ENCODE measurements at regions of chr15 and their contacts with region 1.

Region 1: GRCh38 chr15:100905850-100906249 is 13.3 kb upstream of the LRRK1 start:
- DNase-seq: no peak
- H3K4me3 Mint-ChIP-seq: no peak overlapping the region
- H3K27ac Mint-ChIP-seq: no peak overlapping the region
- H3K4me1 Mint-ChIP-seq: no peaks in the 10 kb centered on the region
- H3K27me3 Mint-ChIP-seq: peaks cover 11% of the 10 kb centered on the region

Region 2: GRCh38 chr15:100918034-100918689 is 12.3 kb after region 1 on chr15:
- CTCF ChIA-PET with region 1: interaction called, 14 read pairs
- POLR2A ChIA-PET with region 1: no interaction called
- DNase-seq: peak; percentile 75
- H3K4me3 Mint-ChIP-seq: peak overlapping the region; percentile 56
- H3K27ac Mint-ChIP-seq: no peak overlapping the region
- H3K4me1 Mint-ChIP-seq: peaks cover 27% of the 10 kb centered on the region
- H3K27me3 Mint-ChIP-seq: peaks cover 70% of the 10 kb centered on the region

Region 3: GRCh38 chr15:101024073-101024695 is 118.3 kb after region 1 on chr15:
- CTCF ChIA-PET with region 1: no interaction called
- POLR2A ChIA-PET with region 1: no interaction called
- DNase-seq: peak; percentile 1
- H3K4me3 Mint-ChIP-seq: no peak overlapping the region
- H3K27ac Mint-ChIP-seq: no peak overlapping the region
- H3K4me1 Mint-ChIP-seq: no peaks in the 10 kb centered on the region
- H3K27me3 Mint-ChIP-seq: peaks cover 9% of the 10 kb centered on the region